Activated T-helper 1 cell treated with anti-CD3 and anti-CD28 coated beads, Interleukin-12 subunit alpha, Interleukin-12 subunit beta, Interleukin-2, Interleukin-4 antibody, amounts not matched to agents 30 ng/mL and 10 ng/mL and 1 ng/mL, durations not matched to agents 14 hours and 24 hours and 36 hours (primary cell): ENCODE measurements at regions of chr10 and their contacts with region 1.

Region 1: DNA sequence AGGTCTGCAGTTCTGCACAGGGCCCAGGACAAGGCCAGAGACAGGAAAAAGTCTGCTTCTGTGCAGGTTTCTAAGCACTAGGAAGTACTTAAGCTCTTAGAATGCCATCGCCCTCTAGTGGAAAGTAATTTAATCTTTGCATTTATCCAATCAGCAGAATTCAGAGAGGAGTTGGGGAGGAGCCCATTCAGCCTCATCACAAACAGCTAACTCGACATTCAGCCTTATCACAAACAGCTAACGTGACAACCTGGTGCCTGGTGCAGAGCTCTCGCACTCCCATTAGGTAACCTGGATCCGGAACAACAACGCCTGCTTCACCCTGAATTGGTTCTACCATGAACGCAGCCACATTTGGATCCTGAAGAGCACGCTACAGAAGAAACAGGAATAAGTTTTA is 15.2 kb downstream of the OAT start:
- DNase-seq: peak; percentile 25
- H3K4me3 Mint-ChIP-seq: no peak overlapping the region
- H3K27ac Mint-ChIP-seq: no peak overlapping the region
- H3K4me1 Mint-ChIP-seq: peaks cover 11% of the 10 kb centered on the region
- H3K27me3 Mint-ChIP-seq: no peaks in the 10 kb centered on the region

Region 2: GRCh38 chr10:123582084-123582989 is 821.2 kb before region 1 on chr10:
- intact Hi-C with region 1: loop called (anchors 1 kb)
- DNase-seq: peak; percentile 46
- H3K4me3 Mint-ChIP-seq: no peak overlapping the region
- H3K27ac Mint-ChIP-seq: no peak overlapping the region
- H3K4me1 Mint-ChIP-seq: no peaks in the 10 kb centered on the region
- H3K27me3 Mint-ChIP-seq: peaks cover 14% of the 10 kb centered on the region

Region 3: DNA sequence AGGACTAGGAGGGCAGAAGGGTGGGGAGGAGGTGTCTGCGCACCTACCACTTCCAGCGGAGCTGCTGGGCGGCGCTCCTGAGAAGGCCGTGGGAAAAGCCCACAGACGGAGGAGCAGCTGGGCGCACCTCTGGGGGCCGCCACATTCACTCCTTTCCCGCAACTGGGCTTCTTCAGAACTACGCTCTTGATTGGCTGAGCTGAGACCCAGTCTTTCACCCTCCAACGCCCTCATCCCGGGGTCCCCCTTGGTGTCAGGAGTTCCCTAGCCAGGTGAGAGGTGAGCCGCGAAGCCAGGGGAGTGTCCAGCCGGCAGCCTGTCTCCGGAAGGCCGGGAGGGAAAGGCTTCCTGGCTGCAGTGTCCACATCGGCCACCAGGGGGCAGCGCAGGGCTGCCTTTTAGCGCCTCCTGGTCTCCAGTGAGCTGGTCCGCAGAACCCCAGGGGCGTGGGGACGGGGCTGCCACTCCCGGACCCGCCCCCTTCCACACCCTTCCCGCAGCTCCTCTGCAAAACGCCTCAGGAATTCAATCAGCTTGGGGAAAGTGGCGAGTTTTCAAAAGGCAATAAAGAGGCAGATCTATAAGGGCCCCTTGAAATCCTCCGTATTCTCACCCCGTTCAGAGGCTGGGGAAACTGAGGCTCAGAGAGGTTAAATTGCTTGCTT is 409.0 kb before region 1 on chr10:
- intact Hi-C with region 1: loop called (anchors 1 kb)
- DNase-seq: peak; percentile 72
- H3K4me3 Mint-ChIP-seq: peak overlapping the region; percentile 53
- H3K27ac Mint-ChIP-seq: no peak overlapping the region
- H3K4me1 Mint-ChIP-seq: peaks cover 12% of the 10 kb centered on the region
- H3K27me3 Mint-ChIP-seq: peaks cover 51% of the 10 kb centered on the region

Region 4: DNA sequence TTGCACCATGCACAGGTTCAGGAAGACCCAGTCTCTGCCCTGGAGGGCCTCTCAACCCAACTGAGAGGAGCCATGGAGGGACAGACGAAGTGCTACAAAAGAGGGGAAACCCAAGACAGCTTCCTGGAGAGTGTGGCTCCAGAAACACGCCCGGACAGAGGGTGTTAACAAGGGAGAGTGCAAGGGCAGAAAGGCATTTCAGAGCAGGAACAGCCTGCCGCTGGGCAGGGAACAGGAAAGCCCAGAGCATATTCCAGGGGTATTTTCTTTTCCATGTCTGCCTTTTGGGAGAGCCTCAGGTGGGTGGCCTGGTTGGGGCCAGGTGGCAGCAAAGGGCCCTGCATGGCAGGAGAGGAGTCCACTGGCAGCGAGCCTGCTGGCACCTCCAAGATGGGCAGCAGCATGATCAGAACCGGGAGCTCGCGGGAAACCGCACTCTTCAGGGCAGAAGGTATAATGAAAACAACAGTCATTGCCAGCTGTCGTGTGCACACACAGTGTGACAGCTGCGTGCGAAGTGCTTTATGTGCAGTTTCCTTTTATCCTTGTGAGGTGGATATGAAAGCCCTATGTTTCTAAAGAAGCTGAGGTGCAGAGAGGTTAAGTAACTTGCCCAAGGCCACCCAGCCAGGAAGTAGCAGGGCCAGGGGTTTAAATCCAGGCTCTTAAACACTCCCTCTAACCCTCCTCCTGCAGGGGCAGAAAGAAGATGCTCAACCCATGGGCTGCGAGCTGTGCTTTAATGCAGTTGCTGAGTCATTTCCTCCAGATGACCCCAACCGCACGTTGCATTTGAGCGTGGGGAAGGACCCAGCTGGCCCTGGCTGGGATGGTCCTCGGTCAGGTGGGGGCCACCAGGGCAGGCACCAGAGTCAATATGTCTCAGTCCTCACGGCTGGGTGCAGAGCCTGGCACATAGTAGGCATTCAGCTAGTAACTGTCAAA is 113.4 kb before region 1 on chr10:
- intact Hi-C with region 1: no loop called
- DNase-seq: no peak
- H3K4me3 Mint-ChIP-seq: no peak overlapping the region
- H3K27ac Mint-ChIP-seq: no peak overlapping the region
- H3K4me1 Mint-ChIP-seq: peaks cover 8% of the 10 kb centered on the region
- H3K27me3 Mint-ChIP-seq: no peaks in the 10 kb centered on the region

Region 5: DNA sequence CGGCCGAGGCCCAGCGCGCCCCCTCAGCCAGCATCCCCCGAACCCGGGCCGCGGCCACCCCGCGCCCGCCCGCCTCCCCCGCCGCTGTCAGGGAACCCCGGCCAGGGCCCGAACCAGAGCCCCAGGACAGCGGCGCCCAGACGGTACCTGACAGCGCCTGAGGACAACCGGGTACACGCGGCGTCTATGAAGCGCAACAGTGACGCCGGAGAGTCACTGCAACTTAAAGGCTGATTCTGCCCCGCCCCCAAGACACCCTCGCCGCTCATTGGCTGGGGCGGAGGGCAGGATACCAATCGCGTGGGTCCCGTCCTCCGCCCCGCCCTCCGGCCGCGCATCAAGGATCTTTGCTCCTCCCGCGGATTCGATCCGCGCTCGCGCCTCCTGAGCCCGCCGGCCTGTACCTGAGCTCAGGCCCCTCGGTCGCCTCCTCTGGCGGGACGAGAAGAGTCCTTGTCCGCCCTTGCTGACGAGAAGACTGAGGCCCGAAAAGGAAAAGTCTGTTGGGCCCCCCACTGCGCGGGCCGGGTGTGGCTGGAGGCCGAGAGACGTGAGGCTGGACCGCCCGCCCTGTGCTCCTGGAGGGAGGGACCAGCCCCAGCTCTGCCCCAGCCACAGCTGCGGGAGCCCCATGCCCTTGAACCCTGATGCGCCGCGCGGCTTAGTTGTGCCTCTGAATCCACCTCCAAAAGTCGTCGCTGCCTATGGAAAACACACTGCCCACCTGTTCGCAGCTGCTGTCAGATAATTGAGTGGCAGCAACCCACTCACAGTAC is 15.4 kb after region 1 on chr10 and contains the start of gene OAT:
- intact Hi-C with region 1: loop called (anchors 1 kb)
- DNase-seq: peak; percentile 95
- H3K4me3 Mint-ChIP-seq: peak within 1 kb of the TSS; percentile 81
- H3K27ac Mint-ChIP-seq: peak within 1 kb of the TSS; percentile 29
- H3K4me1 Mint-ChIP-seq: peaks cover 12% of the 10 kb centered on the region
- H3K27me3 Mint-ChIP-seq: peaks cover 22% of the 10 kb centered on the region
- total RNA-seq, gene OAT: 35.6 and 37.9 TPM in 2 replicates

Region 6: GRCh38 chr10:124461438-124462347 is 58.1 kb after region 1 on chr10 and contains the start of gene LHPP:
- intact Hi-C with region 1: loop called (anchors 1 kb)
- DNase-seq: peak; percentile 86
- H3K4me3 Mint-ChIP-seq: peak within 1 kb of the TSS; percentile 87
- H3K27ac Mint-ChIP-seq: peak within 1 kb of the TSS; percentile 98
- H3K4me1 Mint-ChIP-seq: peaks cover 26% of the 10 kb centered on the region
- H3K27me3 Mint-ChIP-seq: peaks cover 14% of the 10 kb centered on the region
- total RNA-seq, gene LHPP: 4.6 and 5.0 TPM in 2 replicates

Region 7: GRCh38 chr10:125719146-125720001 is 1315.8 kb after region 1 on chr10 and contains the start of gene EDRF1:
- intact Hi-C with region 1: loop called (anchors 2 kb)
- DNase-seq: peak; percentile 100
- H3K4me3 Mint-ChIP-seq: peak within 1 kb of the TSS; percentile 98
- H3K27ac Mint-ChIP-seq: peak within 1 kb of the TSS; percentile 98
- H3K4me1 Mint-ChIP-seq: peaks cover 21% of the 10 kb centered on the region
- H3K27me3 Mint-ChIP-seq: no peaks in the 10 kb centered on the region
- total RNA-seq, gene EDRF1: 43.4 and 43.9 TPM in 2 replicates